Activated B cell treated with CpG ODN at 0.5 μM for 24 hours (primary cell): ENCODE measurements at regions of chr4 and their contacts with region 1.

Region 1: DNA sequence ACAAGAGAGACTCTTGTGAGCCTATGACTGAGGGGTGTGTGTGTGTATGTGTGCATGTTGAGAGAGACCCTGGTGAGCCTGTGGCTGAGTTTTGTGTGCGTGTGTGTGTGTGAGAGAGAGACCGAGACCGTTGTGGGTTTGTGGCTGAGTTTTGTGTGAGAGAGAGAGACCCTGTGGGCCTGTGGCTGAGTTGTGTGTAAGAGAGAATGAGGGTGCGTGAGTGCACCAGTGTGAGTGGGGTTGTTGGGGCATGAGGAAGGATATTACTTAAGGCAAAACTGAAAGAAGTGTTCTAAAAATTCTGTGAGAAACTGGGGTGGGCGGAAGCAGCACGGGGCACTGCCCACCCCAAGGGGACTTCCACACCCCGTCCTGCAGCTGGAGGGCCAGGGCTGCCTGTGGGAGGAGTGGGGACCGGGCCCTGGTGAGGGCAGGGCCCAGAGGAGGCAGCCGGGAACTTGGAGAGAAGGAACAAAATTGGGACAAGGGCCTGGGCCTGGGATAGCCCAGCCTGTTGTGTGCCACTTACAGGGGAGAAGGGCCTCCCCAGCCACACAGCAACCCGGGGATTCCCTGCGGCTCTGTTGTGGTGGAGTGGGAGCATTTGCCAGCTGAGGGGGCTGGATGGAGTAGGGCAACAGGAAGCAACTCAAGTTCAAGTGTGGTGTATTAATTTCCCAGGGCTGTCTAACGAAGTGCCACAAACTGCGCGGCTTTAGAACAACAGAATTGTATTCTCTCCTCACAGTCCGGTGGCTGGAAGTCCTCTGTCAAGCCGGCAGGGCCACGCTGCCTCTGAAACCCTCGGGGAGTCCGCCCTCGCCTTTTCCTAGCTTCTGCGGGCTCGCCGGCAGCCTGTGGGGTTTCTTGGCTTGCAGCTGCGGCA is 22.1 kb downstream of the TMEM131L start:
- DNase-seq: peak; percentile 62
- ATAC-seq: peak; percentile 76
- H3K4me3 Mint-ChIP-seq: peak overlapping the region; percentile 78
- H3K27ac Mint-ChIP-seq: peak overlapping the region; percentile 92
- H3K4me1 Mint-ChIP-seq: peaks cover 89% of the 10 kb centered on the region
- H3K27me3 Mint-ChIP-seq: no peaks in the 10 kb centered on the region
- CTCF ChIP-seq: no peak

Region 2: DNA sequence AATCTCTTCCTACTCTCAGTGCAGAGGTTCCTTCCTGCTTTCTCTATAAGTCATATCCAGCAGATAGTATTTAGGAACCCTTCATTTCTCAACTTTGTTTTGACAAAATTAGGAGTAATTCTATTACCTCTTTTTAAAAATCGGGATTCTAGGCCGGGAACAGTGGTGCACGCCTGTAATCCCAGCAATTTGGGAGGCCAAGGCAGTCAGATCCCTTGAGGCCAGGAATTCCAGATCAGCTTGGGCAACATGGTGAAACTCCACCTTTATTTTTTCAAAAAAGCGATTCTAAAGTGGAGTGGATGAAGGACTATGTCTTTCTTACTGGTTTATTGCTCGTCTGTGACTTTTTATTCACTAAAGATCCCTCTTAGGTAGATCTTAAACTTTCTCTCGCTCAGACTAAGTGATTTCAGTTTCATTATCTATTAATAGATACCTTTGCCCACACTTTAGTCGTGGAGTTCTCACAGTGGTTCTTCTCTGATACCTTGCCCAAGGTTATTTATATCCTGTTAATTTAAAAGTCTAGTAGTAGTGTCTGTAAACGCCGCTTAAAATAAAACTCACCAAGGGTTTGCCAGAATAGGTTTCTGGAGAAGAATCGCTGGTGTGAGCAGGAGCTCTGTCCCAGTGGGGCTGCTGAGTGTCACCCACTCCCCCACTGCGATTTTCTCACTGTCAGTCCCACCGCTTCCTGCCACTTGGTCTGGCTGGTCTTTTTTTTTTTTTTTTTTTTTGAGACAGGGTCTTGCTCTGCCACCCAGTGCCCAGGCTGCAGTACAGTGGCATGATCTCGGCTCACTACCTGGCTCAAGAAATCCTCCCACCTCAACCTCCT is 49.1 kb before region 1 on chr4:
- CTCF ChIA-PET with region 1: no interaction called
- POLR2A ChIA-PET with region 1: interaction called, 7 read pairs
- intact Hi-C with region 1: loop called (anchors 1 kb)
- DNase-seq: peak; percentile 37
- ATAC-seq: peak; percentile 68
- H3K4me3 Mint-ChIP-seq: peak overlapping the region; percentile 83
- H3K27ac Mint-ChIP-seq: peak overlapping the region; percentile 92
- H3K4me1 Mint-ChIP-seq: peaks cover 67% of the 10 kb centered on the region
- H3K27me3 Mint-ChIP-seq: no peaks in the 10 kb centered on the region
- CTCF ChIP-seq: no peak

Region 3: DNA sequence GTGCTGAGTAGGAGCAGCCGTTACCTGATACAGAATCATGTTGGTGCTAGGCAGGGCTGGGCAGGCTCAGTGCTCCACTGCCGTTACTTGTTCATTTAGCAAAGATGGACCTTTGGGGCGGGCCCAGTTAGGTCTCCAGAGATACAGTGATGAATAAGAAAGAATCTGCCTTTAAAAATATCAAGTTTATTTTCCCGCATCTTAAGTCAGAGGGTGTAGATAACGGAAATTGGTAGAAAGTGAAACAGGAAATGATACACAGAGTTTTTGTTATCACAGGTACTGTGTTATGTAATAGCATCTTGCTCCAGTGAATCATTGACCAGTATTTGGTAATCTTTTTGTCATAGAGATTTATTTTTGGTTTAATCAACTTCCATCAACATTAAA is 16.6 kb before region 1 on chr4:
- CTCF ChIA-PET with region 1: interaction called, 9 read pairs
- POLR2A ChIA-PET with region 1: interaction called, 103 read pairs
- intact Hi-C with region 1: loop called (anchors 1 kb)
- DNase-seq: no peak
- ATAC-seq: peak; percentile 35
- H3K4me3 Mint-ChIP-seq: peak overlapping the region; percentile 97
- H3K27ac Mint-ChIP-seq: peak overlapping the region; percentile 98
- H3K4me1 Mint-ChIP-seq: peaks cover 89% of the 10 kb centered on the region
- H3K27me3 Mint-ChIP-seq: no peaks in the 10 kb centered on the region
- CTCF ChIP-seq: no peak

Region 4: DNA sequence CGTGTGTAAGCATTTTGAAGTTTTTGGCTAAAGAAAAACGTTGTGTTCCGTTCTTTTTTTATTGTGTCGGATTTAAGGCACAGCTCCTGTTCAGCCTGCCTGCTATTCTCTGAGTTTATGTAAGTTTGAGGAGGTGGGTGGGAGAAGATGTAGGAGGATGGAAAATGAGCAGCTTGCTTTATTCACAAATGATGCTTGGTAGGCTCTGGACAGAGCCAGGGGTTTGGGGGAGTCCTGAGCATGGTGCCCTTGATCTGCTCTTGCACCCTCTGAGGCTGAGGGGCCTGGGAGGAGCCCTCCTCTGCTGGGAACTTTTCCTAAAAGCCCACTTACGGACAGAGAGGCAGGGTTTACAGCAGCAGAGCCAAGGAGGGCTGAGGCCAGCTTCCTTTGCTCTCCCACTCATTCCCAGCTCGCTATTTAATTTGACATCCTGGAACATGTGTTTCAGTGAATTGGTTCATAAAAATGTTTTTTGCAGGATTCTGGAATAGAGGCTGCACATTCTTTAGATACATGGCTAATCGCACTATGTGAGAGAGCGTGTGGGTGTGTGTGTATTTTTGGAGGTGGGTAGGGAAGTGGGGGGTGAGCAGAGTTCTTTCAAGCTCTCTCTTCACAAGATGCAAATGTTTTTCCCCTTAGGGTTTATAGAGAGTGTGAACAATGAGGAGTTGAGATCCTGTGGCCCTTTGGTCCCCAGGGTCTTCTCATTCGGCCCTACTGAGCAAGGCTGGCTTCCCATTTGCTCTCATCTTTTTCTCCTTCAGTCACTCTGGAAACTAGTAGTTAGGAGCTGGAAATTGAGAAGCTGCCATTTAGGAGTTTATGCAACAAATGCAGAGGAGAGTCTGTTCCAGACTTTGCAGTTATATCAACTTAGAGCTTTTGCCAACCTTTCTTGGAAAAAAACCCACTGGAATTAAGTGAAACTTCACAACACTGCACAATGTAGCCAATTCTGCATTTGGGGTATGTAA is 10.0 kb after region 1 on chr4:
- CTCF ChIA-PET with region 1: interaction called, 3 read pairs
- POLR2A ChIA-PET with region 1: interaction called, 42 read pairs
- intact Hi-C with region 1: loop called (anchors 1 kb)
- DNase-seq: no peak
- ATAC-seq: peak; percentile 79
- H3K4me3 Mint-ChIP-seq: peak overlapping the region; percentile 73
- H3K27ac Mint-ChIP-seq: peak overlapping the region; percentile 80
- H3K4me1 Mint-ChIP-seq: peaks cover 94% of the 10 kb centered on the region
- H3K27me3 Mint-ChIP-seq: no peaks in the 10 kb centered on the region
- CTCF ChIP-seq: no peak

Region 5: DNA sequence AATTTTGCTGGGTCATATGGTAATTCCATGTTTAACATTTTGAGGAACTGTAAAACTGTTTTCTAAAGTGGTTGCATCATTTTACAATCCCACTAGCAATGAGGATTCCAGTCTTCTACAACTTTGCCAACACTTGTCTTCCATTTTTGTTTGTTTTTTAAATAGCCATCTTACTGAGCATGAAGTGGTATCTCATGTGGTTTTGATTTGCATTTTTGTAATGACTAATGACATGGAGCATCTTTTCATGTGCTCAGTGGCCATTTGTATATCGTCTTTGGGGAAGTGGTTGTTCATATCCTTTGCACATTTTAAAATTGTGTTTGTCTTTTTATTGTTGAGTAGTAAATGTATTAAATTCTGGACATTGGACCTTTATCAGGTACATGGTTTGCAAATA is 72.7 kb after region 1 on chr4:
- CTCF ChIA-PET with region 1: no interaction called
- POLR2A ChIA-PET with region 1: no interaction called
- intact Hi-C with region 1: no loop called
- DNase-seq: no peak
- ATAC-seq: peak; percentile 74
- H3K4me3 Mint-ChIP-seq: no peak overlapping the region
- H3K27ac Mint-ChIP-seq: peak overlapping the region; percentile 51
- H3K4me1 Mint-ChIP-seq: peaks cover 42% of the 10 kb centered on the region
- H3K27me3 Mint-ChIP-seq: no peaks in the 10 kb centered on the region
- CTCF ChIP-seq: no peak

Region 6: DNA sequence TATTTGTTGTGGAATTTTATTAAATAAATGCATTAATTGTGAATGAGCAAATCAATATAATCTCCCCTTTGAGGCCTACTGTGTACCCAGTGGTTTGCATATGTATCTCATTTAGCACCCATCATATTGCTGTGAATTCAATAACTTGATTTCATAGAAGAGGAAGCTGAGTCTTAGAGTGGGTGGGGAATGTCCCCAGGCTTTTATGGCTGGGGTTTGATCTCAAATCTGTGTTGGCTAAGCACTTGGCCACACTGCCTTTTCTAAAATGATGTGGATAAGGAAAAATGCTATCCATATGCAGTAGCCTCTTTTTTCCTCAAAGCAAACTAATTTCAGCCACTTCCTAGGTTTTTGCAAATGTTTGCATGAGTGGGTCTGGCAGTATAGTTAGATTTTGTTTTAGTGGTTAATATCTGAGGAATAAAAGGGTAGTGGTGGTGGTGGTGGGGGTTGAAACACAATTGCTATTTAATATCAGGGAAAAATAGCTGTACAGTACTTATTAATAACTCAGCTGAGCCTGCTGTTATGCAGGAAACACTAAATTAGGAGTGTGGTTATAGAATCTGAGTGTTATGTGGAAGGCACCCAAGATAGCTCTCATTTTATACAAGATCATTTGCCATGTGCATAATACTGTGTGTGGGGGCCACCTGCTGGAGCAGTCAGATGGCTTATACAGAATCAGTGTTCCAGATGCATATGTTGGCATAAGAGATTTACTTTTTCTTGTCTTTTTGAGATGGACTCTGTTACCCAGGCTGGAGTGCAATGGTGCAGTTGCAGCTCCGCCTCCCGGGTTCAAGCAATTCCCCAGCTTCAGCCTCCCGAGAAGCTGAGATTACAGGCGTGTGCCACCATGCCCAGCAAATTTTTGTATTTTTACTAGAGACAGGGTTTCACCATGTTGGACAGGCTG is 85.9 kb after region 1 on chr4:
- CTCF ChIA-PET with region 1: interaction called, 5 read pairs
- POLR2A ChIA-PET with region 1: interaction called, 6 read pairs
- intact Hi-C with region 1: loop called (anchors 1 kb)
- DNase-seq: no peak
- ATAC-seq: peak; percentile 78
- H3K4me3 Mint-ChIP-seq: peak overlapping the region; percentile 32
- H3K27ac Mint-ChIP-seq: peak overlapping the region; percentile 82
- H3K4me1 Mint-ChIP-seq: peaks cover 77% of the 10 kb centered on the region
- H3K27me3 Mint-ChIP-seq: no peaks in the 10 kb centered on the region
- CTCF ChIP-seq: no peak